Heart right ventricle (tissue), 16 donors: ENCODE measurements at regions of chr10 and their contacts with region 1.

Region 1: DNA sequence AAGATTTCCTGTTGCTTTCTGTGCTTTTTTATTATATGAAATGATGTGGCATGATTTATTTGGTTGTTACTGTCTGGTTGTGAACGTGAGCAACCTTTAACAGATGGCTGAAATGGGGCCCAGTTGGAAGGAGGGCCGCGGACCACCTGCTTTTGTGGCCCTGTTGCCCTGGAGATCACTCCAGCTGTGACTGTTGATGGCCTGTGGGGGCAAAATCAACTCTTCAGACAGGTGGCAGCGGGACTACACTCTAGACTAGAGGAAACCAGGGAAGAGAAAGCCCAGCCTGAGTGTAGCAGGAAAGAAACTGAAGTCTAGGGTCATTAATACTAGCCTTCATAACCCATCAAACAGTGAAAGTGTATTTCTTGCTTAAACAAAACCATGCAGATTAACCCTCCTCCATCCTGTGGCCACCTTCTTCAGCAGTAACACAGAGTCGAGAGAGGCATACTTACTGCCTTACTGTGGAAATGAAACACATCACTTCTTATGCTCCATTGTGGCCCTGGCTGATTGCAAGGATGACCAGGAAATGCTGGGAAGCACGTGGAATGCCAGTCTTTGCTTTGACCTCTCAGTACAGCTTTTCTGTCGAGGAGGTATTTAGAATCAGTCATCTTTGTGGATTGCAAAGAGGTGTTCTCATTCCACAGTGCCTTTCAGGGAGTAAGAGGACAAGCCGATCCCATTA is 80.5 kb downstream of the CCNY start:
- DNase-seq: no peak
- ATAC-seq: no peak
- H3K4me3 ChIP-seq: no peak overlapping the region
- H3K27ac ChIP-seq: peak overlapping the region in 5 of 10 donors; percentile 11 to 74 (median 40)
- H3K4me1 ChIP-seq: peaks cover 34 to 100% (median 84%) of the 10 kb centered on the region in 9 donors
- H3K27me3 ChIP-seq: no peaks in the 10 kb centered on the region
- CTCF ChIP-seq: no peak

Region 2: DNA sequence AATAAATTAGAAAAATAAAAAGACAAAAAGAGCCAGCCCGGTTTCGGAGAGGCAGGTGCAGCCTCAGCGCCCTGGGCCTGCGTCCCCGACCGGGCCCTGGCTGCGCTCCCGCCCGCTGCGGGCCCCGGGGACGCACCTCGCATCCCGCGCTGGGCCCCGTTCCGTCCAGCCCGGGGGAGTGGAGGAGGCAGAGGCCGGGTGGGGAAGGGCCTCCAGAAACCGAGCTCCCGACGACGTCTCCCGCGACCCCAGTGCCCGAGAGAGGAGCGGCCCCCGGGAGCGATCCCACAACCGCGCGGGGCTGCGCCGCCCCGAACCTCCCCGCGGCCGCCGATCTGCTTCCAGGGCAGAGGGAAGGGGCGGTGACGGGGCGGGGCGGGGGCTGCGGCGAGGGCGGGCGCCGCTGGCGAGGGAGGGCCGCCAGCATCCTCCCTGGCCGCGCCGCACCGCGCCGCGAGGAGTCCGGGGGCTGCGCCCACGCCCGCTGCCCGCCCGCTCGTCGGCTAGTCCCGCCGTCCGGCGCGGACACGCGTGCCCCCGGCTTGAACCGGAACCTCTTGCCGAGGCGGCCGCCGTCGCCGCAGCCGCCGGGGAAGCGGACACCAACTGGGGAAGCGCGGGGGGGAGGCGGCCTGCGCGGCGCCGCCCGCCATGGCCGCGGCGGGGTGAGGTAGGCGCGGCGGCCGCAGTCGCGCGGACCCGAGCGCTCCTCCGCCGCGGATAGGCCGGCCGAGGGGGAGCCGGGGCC is 80.5 kb before region 1 on chr10 and contains the start of gene CCNY:
- intact Hi-C with region 1: no loop called
- DNase-seq: peak; percentile 84 to 86
- ATAC-seq: peak; percentile 86 to 94 (median 90)
- H3K4me3 ChIP-seq: peak within 1 kb of the TSS; percentile 91 to 99 (median 96)
- H3K27ac ChIP-seq: peak within 1 kb of the TSS; percentile 85 to 96 (median 92)
- H3K4me1 ChIP-seq: peaks cover 14 to 84% (median 78%) of the 10 kb centered on the region in 9 donors
- H3K27me3 ChIP-seq: no peaks in the 10 kb centered on the region
- CTCF ChIP-seq: no peak
- total RNA-seq, gene CCNY: 69.9 to 99.4 (median 90.1) TPM

Region 3: GRCh38 chr10:35347121-35347562 is 69.6 kb before region 1 on chr10:
- intact Hi-C with region 1: no loop called
- DNase-seq: no peak
- ATAC-seq: peak; percentile 43 to 84 (median 74)
- H3K4me3 ChIP-seq: no peak overlapping the region
- H3K27ac ChIP-seq: peak overlapping the region in 7 of 10 donors; percentile 23 to 61 (median 51)
- H3K4me1 ChIP-seq: peaks cover 25 to 94% (median 83%) of the 10 kb centered on the region in 9 donors
- H3K27me3 ChIP-seq: no peaks in the 10 kb centered on the region
- CTCF ChIP-seq: no peak

Region 4: GRCh38 chr10:35398355-35398754 is 18.4 kb before region 1 on chr10:
- intact Hi-C with region 1: loop called in 1 of 10 experiments (anchors 1 kb)
- DNase-seq: no peak
- ATAC-seq: peak in 1 of 8 donors; percentile 4
- H3K4me3 ChIP-seq: no peak overlapping the region
- H3K27ac ChIP-seq: peak overlapping the region in 3 of 10 donors; percentile 7 to 68 (median 42)
- H3K4me1 ChIP-seq: peaks cover 35 to 99% (median 79%) of the 10 kb centered on the region in 9 donors
- H3K27me3 ChIP-seq: no peaks in the 10 kb centered on the region
- CTCF ChIP-seq: no peak

Region 5: GRCh38 chr10:35716776-35717175 is 300.0 kb after region 1 on chr10:
- intact Hi-C with region 1: no loop called
- DNase-seq: no peak
- ATAC-seq: no peak
- H3K4me3 ChIP-seq: no peak overlapping the region
- H3K27ac ChIP-seq: no peak overlapping the region
- H3K4me1 ChIP-seq: peaks cover 0 to 13% (median 0%) of the 10 kb centered on the region in 9 donors
- H3K27me3 ChIP-seq: peaks cover 0 to 8% (median 0%) of the 10 kb centered on the region in 7 donors
- CTCF ChIP-seq: no peak

Region 6: GRCh38 chr10:35795131-35795819 is 378.5 kb after region 1 on chr10:
- intact Hi-C with region 1: no loop called
- DNase-seq: peak in 1 of 2 donors; percentile 15
- ATAC-seq: peak in 5 of 8 donors; percentile 7 to 61 (median 38)
- H3K4me3 ChIP-seq: no peak overlapping the region
- H3K27ac ChIP-seq: peak overlapping the region in 3 of 10 donors; percentile 32 to 48 (median 37)
- H3K4me1 ChIP-seq: peaks cover 0 to 5% (median 0%) of the 10 kb centered on the region in 9 donors
- H3K27me3 ChIP-seq: no peaks in the 10 kb centered on the region
- CTCF ChIP-seq: no peak